PC-3 (cell line): ENCODE measurements at regions of chr1 and their contacts with region 1.

Region 1: GRCh38 chr1:190320952-190321351 is 156.7 kb downstream of the BRINP3 start:
- DNase-seq: peak; percentile 75
- ATAC-seq: peak; percentile 99
- H3K4me3 ChIP-seq: no peak overlapping the region
- H3K27ac ChIP-seq: no peak overlapping the region
- H3K4me1 ChIP-seq: no peaks in the 10 kb centered on the region
- H3K27me3 ChIP-seq: peaks cover 40% of the 10 kb centered on the region
- CTCF ChIP-seq: peak; percentile 76

Region 2: GRCh38 chr1:189429610-189430009 is 891.3 kb before region 1 on chr1:
- CTCF ChIA-PET with region 1: no interaction called
- POLR2A ChIA-PET with region 1: no interaction called
- intact Hi-C with region 1: loop called (anchors 2 kb)
- DNase-seq: peak; percentile 71
- ATAC-seq: no peak
- H3K4me3 ChIP-seq: no peak overlapping the region
- H3K27ac ChIP-seq: no peak overlapping the region
- H3K4me1 ChIP-seq: peaks cover 3% of the 10 kb centered on the region
- H3K27me3 ChIP-seq: no peaks in the 10 kb centered on the region
- CTCF ChIP-seq: peak; percentile 69

Region 3: DNA sequence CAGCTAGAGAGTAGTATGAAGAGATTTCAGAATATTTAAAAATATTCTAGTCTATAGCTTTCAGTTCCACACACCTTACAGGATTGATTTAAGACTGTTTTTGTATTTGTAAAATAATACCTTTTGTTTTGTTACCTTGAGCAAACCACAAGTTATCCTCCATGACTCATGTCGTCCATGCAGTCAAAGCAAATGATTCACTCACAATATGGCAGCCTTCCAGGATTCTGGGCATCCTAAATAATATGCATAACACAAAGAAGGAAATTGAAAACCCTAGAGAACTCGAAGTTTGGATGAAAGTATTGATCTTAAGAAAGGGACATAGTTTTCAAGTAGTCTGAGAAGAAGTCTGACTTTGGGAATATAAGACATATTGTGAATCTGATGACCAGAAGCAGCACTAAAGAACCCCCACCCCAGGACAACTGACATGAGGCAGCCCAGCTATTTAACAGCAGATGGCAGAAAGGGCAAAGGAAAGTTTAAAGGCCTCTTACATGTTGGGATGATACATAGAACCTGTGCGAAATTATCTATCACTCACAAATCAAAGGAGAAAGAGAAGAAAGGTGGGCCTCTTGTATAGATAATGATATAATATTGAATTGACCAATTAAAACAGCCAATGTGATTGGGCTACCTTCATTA is 701.1 kb before region 1 on chr1:
- CTCF ChIA-PET with region 1: no interaction called
- POLR2A ChIA-PET with region 1: no interaction called
- intact Hi-C with region 1: loop called (anchors 2 kb)
- DNase-seq: peak; percentile 96
- ATAC-seq: peak; percentile 79
- H3K4me3 ChIP-seq: no peak overlapping the region
- H3K27ac ChIP-seq: peak overlapping the region; percentile 40
- H3K4me1 ChIP-seq: peaks cover 21% of the 10 kb centered on the region
- H3K27me3 ChIP-seq: no peaks in the 10 kb centered on the region
- CTCF ChIP-seq: no peak; the same call in 1 of the 2 replicates

Region 4: GRCh38 chr1:189708674-189709073 is 612.3 kb before region 1 on chr1:
- CTCF ChIA-PET with region 1: no interaction called
- POLR2A ChIA-PET with region 1: no interaction called
- intact Hi-C with region 1: loop called (anchors 5 kb)
- DNase-seq: peak; percentile 33
- ATAC-seq: peak; percentile 56
- H3K4me3 ChIP-seq: no peak overlapping the region
- H3K27ac ChIP-seq: no peak overlapping the region
- H3K4me1 ChIP-seq: no peaks in the 10 kb centered on the region
- H3K27me3 ChIP-seq: no peaks in the 10 kb centered on the region
- CTCF ChIP-seq: peak; percentile 45

Region 5: GRCh38 chr1:190084552-190084951 is 236.4 kb before region 1 on chr1:
- CTCF ChIA-PET with region 1: no interaction called
- POLR2A ChIA-PET with region 1: no interaction called
- intact Hi-C with region 1: loop called (anchors 1 kb)
- DNase-seq: peak; percentile 69
- ATAC-seq: no peak; the same call in 1 of the 2 replicates
- H3K4me3 ChIP-seq: no peak overlapping the region
- H3K27ac ChIP-seq: no peak overlapping the region
- H3K4me1 ChIP-seq: no peaks in the 10 kb centered on the region
- H3K27me3 ChIP-seq: peaks cover 43% of the 10 kb centered on the region
- CTCF ChIP-seq: peak; percentile 91

Region 6: DNA sequence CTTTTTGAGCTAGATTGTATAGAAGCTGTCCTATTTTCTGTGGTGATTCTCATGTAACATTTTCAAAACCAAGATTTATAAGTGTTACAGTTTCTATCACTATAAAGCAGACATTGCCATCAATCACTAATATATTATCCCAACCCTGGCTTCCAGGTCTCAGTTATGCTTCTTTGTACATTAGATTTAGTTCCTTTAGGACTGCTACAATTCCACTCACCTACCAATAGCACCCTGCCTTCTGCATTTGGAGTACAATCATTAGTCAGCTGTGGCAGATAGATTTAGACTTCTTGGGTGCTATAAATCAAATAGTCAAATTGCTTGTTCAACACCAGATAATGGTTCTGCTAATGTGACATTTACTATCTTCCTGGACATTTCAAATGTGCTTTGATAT is 124.9 kb before region 1 on chr1:
- CTCF ChIA-PET with region 1: no interaction called
- POLR2A ChIA-PET with region 1: no interaction called
- intact Hi-C with region 1: no loop called
- DNase-seq: no peak
- ATAC-seq: no peak
- H3K4me3 ChIP-seq: no peak overlapping the region
- H3K27ac ChIP-seq: no peak overlapping the region
- H3K4me1 ChIP-seq: no peaks in the 10 kb centered on the region
- H3K27me3 ChIP-seq: peaks cover 16% of the 10 kb centered on the region; the same call in 1 of the 2 replicates
- CTCF ChIP-seq: no peak

Region 7: GRCh38 chr1:190436615-190437014 is 115.7 kb after region 1 on chr1:
- CTCF ChIA-PET with region 1: no interaction called
- POLR2A ChIA-PET with region 1: no interaction called
- intact Hi-C with region 1: loop called (anchors 5 kb)
- DNase-seq: peak; percentile 69
- ATAC-seq: peak; percentile 67
- H3K4me3 ChIP-seq: no peak overlapping the region
- H3K27ac ChIP-seq: no peak overlapping the region
- H3K4me1 ChIP-seq: no peaks in the 10 kb centered on the region
- H3K27me3 ChIP-seq: no peaks in the 10 kb centered on the region
- CTCF ChIP-seq: peak; percentile 71